IMR-90 (cell line): ENCODE measurements at regions of chr4 and their contacts with region 1.

Region 1: DNA sequence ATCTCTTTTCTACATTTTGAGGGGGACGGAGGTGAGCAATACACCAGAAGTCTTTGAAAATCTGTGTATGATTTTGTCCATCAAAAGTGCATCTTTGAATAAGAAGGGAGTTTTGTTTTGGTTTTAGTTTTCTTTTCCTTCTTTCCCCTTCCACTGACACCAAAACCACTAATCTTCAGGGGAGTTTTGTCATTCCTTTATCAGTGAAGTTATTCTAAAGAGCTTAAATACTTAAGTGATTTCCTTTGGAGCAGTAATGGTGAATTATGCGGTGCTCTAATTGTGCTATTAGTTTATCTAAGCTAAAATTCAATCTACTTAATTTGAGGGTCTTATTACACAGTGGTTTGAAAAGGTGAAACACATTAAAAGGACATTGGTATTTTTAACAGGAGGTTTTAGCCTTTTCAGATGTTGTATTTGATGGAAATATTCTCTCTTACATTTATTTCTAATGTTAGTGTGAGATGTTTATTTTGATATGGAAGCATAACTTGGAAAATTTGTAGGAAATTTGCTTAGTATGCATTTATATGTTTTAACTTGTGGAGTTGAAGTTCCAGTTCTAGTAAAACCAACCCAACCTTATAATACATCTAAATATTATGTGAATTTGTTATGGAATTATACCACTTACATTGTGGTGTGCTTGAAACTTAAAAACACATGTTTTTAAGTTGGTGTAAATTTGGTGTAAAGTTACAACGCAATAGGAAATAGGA is 124.9 kb downstream of the PCDH7 start:
- DNase-seq: no peak
- ATAC-seq: no peak
- H3K4me3 ChIP-seq: no peak overlapping the region
- H3K27ac ChIP-seq: no peak overlapping the region
- H3K4me1 ChIP-seq: peaks cover 2% of the 10 kb centered on the region
- H3K27me3 ChIP-seq: no peaks in the 10 kb centered on the region
- CTCF ChIP-seq: no peak
- POLR2A ChIP-seq: no peak
- RAD21 ChIP-seq: no peak

Region 2: GRCh38 chr4:30866346-30866745 is 21.3 kb after region 1 on chr4:
- CTCF ChIA-PET with region 1: interaction called, 4 read pairs
- POLR2A ChIA-PET with region 1: interaction called, 12 read pairs
- dilution Hi-C with region 1: no loop called
- in situ Hi-C with region 1: no loop called
- intact Hi-C with region 1: no loop called
- DNase-seq: peak; percentile 43
- ATAC-seq: peak; percentile 56
- H3K4me3 ChIP-seq: no peak overlapping the region
- H3K27ac ChIP-seq: peak overlapping the region; percentile 38; the same call in 1 of the 2 replicates
- H3K4me1 ChIP-seq: peaks cover 10% of the 10 kb centered on the region
- H3K27me3 ChIP-seq: no peaks in the 10 kb centered on the region
- CTCF ChIP-seq: no peak
- POLR2A ChIP-seq: no peak
- RAD21 ChIP-seq: no peak

Region 3: GRCh38 chr4:31160146-31160545 is 315.1 kb after region 1 on chr4:
- CTCF ChIA-PET with region 1: no interaction called
- POLR2A ChIA-PET with region 1: no interaction called
- dilution Hi-C with region 1: no loop called
- in situ Hi-C with region 1: no loop called
- intact Hi-C with region 1: no loop called
- DNase-seq: no peak
- ATAC-seq: no peak
- H3K4me3 ChIP-seq: no peak overlapping the region
- H3K27ac ChIP-seq: no peak overlapping the region
- H3K4me1 ChIP-seq: no peaks in the 10 kb centered on the region
- H3K27me3 ChIP-seq: no peaks in the 10 kb centered on the region; the same call in 1 of the 2 replicates
- CTCF ChIP-seq: no peak
- POLR2A ChIP-seq: no peak
- RAD21 ChIP-seq: no peak